Activated CD4-positive, alpha-beta memory T cell treated with anti-CD3 and anti-CD28 coated beads, Interleukin-2, amount 10 ng/mL, durations not matched to agents 7 days and 5 days (primary cell): ENCODE measurements at regions of chr7 and their contacts with region 1.

Region 1: DNA sequence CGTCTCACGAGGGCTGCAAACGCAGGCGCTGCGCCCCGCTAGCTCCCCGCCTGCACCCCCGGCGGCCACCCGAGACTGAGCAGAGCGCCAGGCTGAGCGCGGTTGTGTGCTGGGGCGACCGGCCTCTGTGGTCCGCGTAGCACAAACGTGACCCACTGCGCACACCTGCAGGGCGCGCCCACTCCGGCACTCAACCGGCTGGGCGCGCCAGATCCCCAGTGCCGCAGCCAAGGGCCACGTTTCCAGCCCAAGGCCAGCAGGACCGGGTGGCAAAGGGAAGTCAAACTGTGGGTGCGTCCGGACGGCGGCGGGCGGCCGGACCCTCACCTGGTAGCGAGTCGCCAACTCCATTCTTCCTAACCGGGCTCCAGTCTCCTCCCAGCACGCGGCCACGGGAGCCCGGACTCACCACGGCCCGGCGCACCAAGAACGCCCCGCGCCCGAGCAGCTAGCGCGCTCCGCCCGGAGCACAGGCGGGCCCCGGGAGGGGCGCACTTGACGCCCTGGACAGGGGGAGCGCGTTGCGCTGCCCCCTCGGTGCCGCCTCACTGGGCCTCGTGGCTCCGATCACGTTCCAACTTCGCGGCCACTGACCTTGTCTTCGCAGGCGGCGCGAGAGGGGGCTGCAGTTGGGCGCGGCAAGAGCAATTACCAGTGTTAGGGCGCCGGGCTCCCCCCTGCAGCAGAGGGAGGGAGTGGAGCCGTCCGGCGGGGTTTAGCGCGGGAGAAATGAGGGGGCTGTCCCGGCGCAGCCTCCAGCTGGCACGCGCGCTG is at the start of gene CDCA7L:
- DNase-seq: peak; percentile 66
- H3K4me3 Mint-ChIP-seq: peak within 1 kb of the TSS; percentile 83
- H3K27ac Mint-ChIP-seq: peak within 1 kb of the TSS; percentile 79
- H3K4me1 Mint-ChIP-seq: peaks cover 66% of the 10 kb centered on the region
- H3K27me3 Mint-ChIP-seq: peaks cover 9% of the 10 kb centered on the region
- total RNA-seq, gene CDCA7L: 38.8 to 48.2 TPM

Region 2: GRCh38 chr7:21898265-21898930 is 47.2 kb before region 1 on chr7:
- CTCF ChIA-PET with region 1: interaction called, 3 read pairs
- POLR2A ChIA-PET with region 1: interaction called, 13 read pairs
- DNase-seq: peak; percentile 33
- H3K4me3 Mint-ChIP-seq: peak overlapping the region; percentile 69
- H3K27ac Mint-ChIP-seq: peak overlapping the region; percentile 93
- H3K4me1 Mint-ChIP-seq: peaks cover 21% of the 10 kb centered on the region
- H3K27me3 Mint-ChIP-seq: no peaks in the 10 kb centered on the region

Region 3: GRCh38 chr7:21962677-21963076 is 17.0 kb after region 1 on chr7:
- CTCF ChIA-PET with region 1: no interaction called
- POLR2A ChIA-PET with region 1: interaction called, 10 read pairs
- DNase-seq: no peak
- H3K4me3 Mint-ChIP-seq: no peak overlapping the region
- H3K27ac Mint-ChIP-seq: no peak overlapping the region
- H3K4me1 Mint-ChIP-seq: peaks cover 3% of the 10 kb centered on the region
- H3K27me3 Mint-ChIP-seq: peaks cover 5% of the 10 kb centered on the region